Tibial artery (tissue), 4 donors: ENCODE measurements at regions of chr5 and their contacts with region 1.

Region 1: DNA sequence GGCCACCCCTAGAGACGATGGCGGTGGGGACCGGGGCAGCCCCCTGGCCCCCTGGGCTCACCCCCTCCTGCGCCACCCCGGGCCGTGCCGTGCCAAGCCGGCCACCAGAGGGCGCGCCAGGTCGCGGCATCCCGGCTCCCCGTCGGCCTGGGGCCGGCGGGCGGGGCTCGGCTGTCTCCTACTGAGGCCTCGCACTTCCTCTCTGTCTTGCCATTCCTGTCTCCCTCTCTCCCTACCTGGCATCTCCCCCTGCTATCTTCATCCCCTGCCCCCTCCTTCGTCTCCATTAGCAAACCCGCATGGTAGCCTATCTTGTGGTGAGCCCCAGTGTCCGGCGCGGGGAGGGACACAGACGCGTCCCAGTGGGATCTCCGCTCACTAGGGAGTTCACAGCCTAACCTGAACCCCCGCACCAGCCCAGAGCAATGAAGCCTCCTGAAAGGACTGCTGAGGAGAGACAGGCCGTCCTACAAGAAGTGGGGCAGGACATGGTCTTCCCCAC is 29.8 kb upstream of the FABP6 start:
- DNase-seq: peak; percentile 57 to 80
- H3K4me3 ChIP-seq: peak overlapping the region; percentile 41 to 52
- H3K27ac ChIP-seq: peak overlapping the region; percentile 5 to 25
- H3K4me1 ChIP-seq: no peaks in the 10 kb centered on the region
- H3K27me3 ChIP-seq: no peaks in the 10 kb centered on the region
- CTCF ChIP-seq: peak; percentile 89 to 90

Region 2: DNA sequence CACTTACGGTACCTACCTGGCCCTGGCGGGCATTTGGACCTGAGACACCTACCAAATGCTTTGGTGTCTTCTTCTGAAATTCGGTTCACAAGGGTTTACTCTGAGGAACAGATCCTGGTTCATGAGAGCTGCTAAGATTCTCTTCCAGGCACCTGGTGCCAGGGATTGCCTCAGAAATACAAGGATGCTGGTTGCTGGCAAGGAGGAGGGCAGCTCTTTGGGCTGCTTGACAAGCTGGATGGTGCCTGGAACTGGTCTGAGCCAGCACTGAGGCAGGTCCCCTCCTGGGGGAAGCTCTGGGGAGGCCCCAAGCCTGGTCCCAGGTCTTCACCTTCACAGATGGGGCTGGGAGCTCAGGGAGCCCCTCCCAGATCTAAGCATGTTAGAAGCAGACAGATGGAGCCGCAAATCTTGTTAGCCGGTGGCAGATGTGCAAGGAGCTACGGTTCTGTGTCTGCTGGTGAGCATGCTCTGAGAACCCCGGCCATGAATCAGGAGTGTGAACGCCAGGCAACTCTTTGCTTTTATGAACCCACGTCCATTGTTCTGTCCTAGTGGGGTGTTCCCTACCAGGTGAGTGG is 46.1 kb after region 1 on chr5:
- intact Hi-C with region 1: no loop called
- DNase-seq: no peak
- H3K4me3 ChIP-seq: no peak overlapping the region
- H3K27ac ChIP-seq: no peak overlapping the region
- H3K4me1 ChIP-seq: no peaks in the 10 kb centered on the region
- H3K27me3 ChIP-seq: peaks cover 0 to 2% of the 10 kb centered on the region in 2 donors
- CTCF ChIP-seq: no peak

Region 3: DNA sequence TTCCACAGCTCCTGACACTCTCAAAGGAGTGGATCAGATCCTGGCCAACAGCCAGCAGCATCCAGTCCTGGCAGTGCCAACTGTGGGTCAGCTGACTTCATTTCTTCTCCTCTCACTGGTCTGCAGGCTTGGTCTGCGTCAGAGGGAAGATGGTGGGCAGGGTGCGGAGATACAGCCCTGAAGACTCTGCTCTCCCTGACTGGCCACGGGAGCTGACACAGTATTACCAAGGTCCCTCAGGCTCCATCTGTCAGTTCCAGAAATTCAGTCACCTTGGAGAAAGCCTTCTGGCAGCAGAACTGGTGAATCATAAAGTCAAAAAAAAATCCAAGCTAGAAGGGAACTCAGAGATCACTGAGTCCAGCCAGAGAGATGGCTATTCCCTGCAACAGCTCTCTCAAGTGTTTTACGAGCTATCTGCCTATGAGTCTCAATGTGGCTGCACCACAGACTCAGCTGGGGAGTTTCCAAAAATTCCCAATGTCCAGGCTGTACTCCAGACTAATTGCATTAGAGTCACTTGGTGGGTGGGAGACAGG is 143.0 kb after region 1 on chr5:
- intact Hi-C with region 1: loop called (anchors 2 kb)
- DNase-seq: peak in 1 of 2 donors; percentile 57
- H3K4me3 ChIP-seq: no peak overlapping the region
- H3K27ac ChIP-seq: no peak overlapping the region
- H3K4me1 ChIP-seq: peaks cover 0 to 5% (median 0%) of the 10 kb centered on the region in 4 donors
- H3K27me3 ChIP-seq: no peaks in the 10 kb centered on the region
- CTCF ChIP-seq: no peak

Region 4: DNA sequence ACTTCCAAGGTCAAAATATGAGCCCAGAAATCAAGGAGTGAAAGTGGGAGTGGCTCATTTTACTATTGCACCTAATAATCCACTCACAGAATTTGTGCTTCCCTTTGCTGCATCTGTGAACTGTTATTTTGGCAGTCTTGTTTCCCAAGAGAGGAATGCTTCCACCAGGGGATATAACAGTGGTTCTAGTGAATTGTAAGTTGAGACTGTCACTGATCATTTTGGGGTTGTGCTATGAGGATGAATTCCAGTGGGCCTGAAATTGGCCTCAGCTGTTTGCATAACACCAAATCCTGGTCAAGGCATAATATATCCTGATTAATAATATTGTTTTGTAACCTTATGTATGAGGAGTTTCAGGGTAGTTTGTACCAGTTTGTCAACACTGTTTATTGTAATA is 186.0 kb after region 1 on chr5:
- intact Hi-C with region 1: loop called (anchors 5 kb)
- DNase-seq: no peak
- H3K4me3 ChIP-seq: no peak overlapping the region
- H3K27ac ChIP-seq: no peak overlapping the region
- H3K4me1 ChIP-seq: no peaks in the 10 kb centered on the region
- H3K27me3 ChIP-seq: no peaks in the 10 kb centered on the region
- CTCF ChIP-seq: no peak